ENCODE measurements at regions of chr15 and their contacts with region 1.

Region 1: DNA sequence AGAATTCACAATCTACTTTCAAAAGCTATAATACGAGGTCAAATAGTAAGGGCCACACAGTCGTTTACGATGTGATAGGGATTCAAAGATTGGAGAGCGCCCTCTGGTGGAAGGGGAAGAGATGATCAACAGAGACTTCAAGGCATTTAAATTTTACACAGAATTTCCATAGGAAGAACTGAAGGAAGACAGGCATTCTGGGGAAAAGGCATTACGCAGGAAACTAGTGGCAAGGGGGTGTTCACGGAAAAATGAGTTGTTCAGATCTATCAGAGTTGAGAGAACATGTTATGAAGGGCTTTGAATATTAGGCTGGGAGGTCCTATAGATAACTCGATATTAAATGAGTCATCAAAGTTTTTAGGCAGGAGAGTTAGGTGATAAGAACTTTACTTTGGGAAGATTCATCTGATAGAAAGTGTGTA is 128.7 kb downstream of the FRMD5 start:
- DNase-seq: peak; percentile 74
- ATAC-seq: peak; percentile 67
- H3K4me3 Mint-ChIP-seq: no peak overlapping the region
- H3K27ac Mint-ChIP-seq: no peak overlapping the region
- H3K4me1 Mint-ChIP-seq: peaks cover 4% of the 10 kb centered on the region
- H3K27me3 Mint-ChIP-seq: peaks cover 29% of the 10 kb centered on the region

Region 2: DNA sequence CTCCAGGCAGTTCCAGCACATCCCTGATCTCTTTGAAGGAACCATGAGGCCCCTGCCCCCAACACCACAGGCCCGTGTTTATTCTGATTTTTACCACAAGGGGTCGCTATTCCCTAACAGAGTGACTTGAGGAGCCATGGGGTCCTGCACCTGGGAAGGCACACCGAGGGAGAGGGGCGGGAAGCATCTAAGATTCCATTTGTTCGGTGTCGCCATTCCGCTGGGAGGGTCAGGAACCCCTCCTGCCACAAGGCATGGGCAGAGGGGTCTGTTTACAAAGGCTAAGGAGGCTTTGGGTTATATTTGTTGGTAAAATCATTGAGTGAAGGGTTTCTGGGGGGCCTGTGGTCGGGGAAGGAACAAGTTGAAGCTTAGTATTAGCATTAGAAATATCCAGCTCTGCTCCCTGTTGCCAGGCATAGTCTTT is 162.5 kb before region 1 on chr15:
- CTCF ChIA-PET with region 1: interaction called, 37 read pairs
- DNase-seq: peak; percentile 68
- ATAC-seq: peak; percentile 82
- H3K4me3 Mint-ChIP-seq: no peak overlapping the region
- H3K27ac Mint-ChIP-seq: no peak overlapping the region
- H3K4me1 Mint-ChIP-seq: peaks cover 4% of the 10 kb centered on the region
- H3K27me3 Mint-ChIP-seq: no peaks in the 10 kb centered on the region

Region 3: DNA sequence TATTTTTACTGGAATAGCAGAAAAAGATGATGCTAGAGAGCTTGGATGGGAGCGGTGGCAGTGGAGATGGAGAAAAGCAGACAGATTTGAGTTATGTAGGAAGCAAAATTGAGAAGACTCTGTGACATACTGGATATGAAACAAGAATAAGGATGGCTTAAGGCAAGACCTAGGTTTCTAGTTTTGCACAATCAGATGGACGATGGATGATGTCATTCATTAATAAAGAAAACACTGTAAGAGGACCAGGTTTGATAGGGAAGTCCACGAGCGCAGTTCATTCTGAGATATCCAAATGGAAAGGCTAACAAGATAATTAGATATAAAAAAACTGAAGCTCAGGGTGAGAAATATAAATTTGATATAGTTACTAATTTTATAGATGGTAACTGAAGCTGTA is 12.9 kb before region 1 on chr15:
- CTCF ChIA-PET with region 1: interaction called, 10 read pairs
- DNase-seq: no peak
- ATAC-seq: no peak
- H3K4me3 Mint-ChIP-seq: no peak overlapping the region
- H3K27ac Mint-ChIP-seq: no peak overlapping the region
- H3K4me1 Mint-ChIP-seq: peaks cover 4% of the 10 kb centered on the region
- H3K27me3 Mint-ChIP-seq: peaks cover 45% of the 10 kb centered on the region

Region 4: DNA sequence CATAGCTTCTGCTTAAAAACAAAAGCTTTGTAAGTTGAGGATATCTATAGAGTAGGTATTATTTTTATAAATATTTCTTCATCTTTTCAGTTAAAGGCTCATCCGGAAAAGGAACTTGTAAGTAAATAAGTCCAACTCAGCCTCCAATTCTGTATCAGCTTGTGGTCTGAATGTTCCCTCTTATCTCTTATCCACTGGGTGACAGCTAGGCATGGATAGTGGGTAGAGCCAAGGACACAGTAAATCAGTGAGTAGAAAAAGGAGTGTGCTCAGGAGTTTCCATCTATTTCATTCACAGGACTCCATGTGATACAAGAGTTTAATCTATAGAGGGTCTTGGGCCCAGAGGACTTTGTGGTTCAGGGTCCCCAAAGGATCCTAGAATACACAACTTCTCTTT is 77.9 kb after region 1 on chr15:
- CTCF ChIA-PET with region 1: no interaction called
- DNase-seq: no peak
- ATAC-seq: no peak
- H3K4me3 Mint-ChIP-seq: no peak overlapping the region
- H3K27ac Mint-ChIP-seq: no peak overlapping the region
- H3K4me1 Mint-ChIP-seq: no peaks in the 10 kb centered on the region
- H3K27me3 Mint-ChIP-seq: peaks cover 27% of the 10 kb centered on the region